ENCODE measurements at regions of chr1 and their contacts with region 1.

Region 1: DNA sequence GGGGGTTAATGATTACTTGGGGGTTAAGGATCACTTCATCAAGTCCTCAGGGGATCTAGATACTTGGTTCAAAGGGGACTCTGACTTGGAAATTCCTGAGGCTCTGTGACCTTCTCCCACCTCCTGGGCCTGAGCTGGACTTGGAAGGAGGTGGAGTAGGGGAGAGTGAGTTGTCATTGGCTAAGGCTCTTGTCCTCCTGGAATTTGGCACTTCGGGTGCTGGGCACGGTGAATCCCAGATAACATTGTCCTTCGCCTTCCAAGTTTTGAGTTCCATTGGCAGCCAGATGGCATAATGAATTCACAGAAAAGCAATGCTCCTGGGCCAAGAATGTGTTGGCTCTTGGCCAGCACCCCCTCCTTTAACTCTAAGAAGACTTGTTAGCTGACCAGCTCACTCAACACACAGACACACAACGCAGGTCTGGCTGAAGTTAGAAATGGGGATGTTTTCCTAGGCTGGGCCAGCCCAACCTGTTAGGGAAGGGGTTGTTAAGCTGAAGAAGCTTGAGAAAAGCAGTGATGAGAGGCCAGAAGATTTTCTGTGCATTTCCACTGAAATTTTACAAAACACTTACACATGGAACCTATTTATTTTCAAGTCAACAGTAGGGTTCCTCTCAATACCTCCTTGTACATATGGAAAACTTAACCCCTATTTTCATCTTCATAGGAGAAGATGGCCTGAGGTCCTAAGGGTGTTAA is 29.7 kb downstream of the SLC26A9 start:
- DNase-seq: peak; percentile 80
- H3K4me3 ChIP-seq: no peak overlapping the region
- H3K27ac ChIP-seq: peak overlapping the region in 1 of 2 donors; percentile 10
- H3K4me1 ChIP-seq: no peaks in the 10 kb centered on the region
- H3K27me3 ChIP-seq: no peaks in the 10 kb centered on the region
- CTCF ChIP-seq: peak in 1 of 4 experiments; percentile 18
- POLR2A ChIP-seq: no peak

Region 2: GRCh38 chr1:205791568-205792180 is 121.9 kb before region 1 on chr1:
- intact Hi-C with region 1: loop called (anchors 5 kb)
- DNase-seq: peak; percentile 61
- H3K4me3 ChIP-seq: no peak overlapping the region
- H3K27ac ChIP-seq: no peak overlapping the region
- H3K4me1 ChIP-seq: no peaks in the 10 kb centered on the region
- H3K27me3 ChIP-seq: no peaks in the 10 kb centered on the region
- CTCF ChIP-seq: peak; percentile 31 to 81 (median 66)
- POLR2A ChIP-seq: no peak

Region 3: DNA sequence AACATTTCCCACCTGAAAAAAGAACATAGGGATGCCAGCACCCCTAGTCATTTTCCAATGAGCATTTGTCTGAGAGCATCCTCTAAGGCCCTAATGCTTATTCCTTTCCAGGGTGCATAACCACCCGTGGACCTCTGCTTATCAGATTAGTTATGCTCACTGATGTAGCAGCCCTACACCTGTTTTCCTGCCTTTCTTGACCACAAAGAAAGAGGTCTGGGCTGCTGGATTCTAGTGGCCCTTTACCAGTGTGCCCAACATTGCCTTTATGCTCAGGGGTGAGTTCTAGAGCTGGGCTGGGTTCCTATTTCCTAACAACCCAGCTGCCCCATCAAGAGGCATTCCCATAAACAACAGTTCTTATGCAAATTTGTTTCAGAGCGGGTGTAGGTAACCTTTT is 43.4 kb before region 1 on chr1:
- intact Hi-C with region 1: no loop called
- DNase-seq: no peak
- H3K4me3 ChIP-seq: no peak overlapping the region
- H3K27ac ChIP-seq: no peak overlapping the region
- H3K4me1 ChIP-seq: no peaks in the 10 kb centered on the region
- H3K27me3 ChIP-seq: no peaks in the 10 kb centered on the region
- CTCF ChIP-seq: no peak
- POLR2A ChIP-seq: no peak

Measured in prostate gland (tissue), 2 donors.